CD8-positive, alpha-beta memory T cell (primary cell): ENCODE measurements at regions of chr19 and their contacts with region 1.

Region 1: DNA sequence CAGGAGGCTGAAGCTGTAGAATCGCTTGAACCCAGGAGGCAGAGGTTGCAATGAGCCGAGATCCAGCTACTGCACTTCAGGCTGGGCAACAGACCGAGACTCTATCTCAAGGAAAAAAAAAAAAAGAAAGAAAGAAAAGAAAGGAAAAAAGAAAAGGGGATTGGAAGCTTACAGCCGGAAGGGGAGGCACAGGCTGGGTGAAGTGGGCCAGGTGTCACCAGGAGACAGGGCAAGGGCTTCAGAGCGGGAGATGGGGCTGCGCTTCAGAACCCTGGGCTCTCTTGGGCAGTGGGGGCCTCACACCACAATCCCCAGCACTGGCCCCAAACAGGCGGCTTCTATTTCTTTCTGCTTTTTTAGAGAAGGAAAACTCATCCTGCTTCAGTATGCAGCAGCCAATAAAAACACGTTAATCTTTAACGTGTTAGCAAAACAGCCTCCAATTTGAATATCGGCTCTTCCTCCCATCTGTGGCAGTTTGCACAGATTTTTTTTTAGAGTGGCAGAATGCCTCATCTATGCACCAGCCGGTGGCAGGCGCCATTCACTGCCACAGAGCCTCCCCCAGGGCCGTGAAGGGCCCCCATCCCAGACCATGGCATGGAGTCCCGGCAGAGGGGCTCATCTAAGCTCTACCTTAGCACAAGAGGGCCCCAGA is 46.6 kb upstream of the C19orf12 start:
- DNase-seq: no peak
- H3K4me3 ChIP-seq: no peak overlapping the region
- H3K4me3 Mint-ChIP-seq: no peak overlapping the region
- H3K27ac ChIP-seq: no peak overlapping the region
- H3K27ac Mint-ChIP-seq: no peak overlapping the region
- H3K4me1 ChIP-seq: no peaks in the 10 kb centered on the region
- H3K4me1 Mint-ChIP-seq: peaks cover 0 to 2% (median 0%) of the 10 kb centered on the region in 3 donors
- H3K27me3 ChIP-seq: no peaks in the 10 kb centered on the region
- H3K27me3 Mint-ChIP-seq: peaks cover 3 to 4% of the 10 kb centered on the region in 2 donors

Region 2: DNA sequence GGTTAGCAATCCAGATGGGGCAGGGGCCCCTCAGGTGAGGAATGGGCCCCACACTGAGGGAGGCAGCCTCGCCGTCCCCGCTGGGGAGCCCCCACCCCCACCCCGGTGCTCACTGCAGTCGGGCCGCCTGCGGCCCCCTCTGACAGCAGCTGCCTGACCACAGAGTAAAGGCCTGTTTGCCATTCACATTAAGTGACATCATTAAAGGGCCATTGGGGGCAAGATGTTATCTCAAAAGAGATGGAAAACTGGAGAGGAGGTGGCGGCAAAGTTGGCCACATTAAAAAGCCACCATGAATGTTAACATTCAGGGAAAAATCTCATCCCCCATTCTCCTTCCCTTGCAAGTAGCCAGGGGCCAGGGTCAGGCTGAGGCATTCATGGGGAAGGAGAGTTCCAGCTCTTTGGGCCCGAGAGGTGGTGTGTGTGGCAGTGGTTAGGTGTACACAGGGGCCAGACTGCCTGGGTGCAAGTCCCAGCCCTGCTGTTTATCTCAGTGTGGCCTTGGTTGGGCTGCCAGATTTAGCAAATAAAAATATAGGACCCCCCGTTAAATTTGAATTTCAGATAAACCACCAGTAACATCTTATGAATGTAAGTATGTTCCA is 215.0 kb before region 1 on chr19:
- CTCF ChIA-PET with region 1: no interaction called
- POLR2A ChIA-PET with region 1: no interaction called
- DNase-seq: no peak
- H3K4me3 ChIP-seq: no peak overlapping the region
- H3K4me3 Mint-ChIP-seq: no peak overlapping the region
- H3K27ac ChIP-seq: no peak overlapping the region
- H3K27ac Mint-ChIP-seq: no peak overlapping the region
- H3K4me1 ChIP-seq: no peaks in the 10 kb centered on the region
- H3K4me1 Mint-ChIP-seq: no peaks in the 10 kb centered on the region
- H3K27me3 ChIP-seq: no peaks in the 10 kb centered on the region
- H3K27me3 Mint-ChIP-seq: peaks cover 10 to 28% of the 10 kb centered on the region in 2 donors

Region 3: GRCh38 chr19:29748996-29749849 is 12.5 kb before region 1 on chr19:
- CTCF ChIA-PET with region 1: no interaction called
- POLR2A ChIA-PET with region 1: no interaction called
- DNase-seq: no peak
- H3K4me3 ChIP-seq: no peak overlapping the region
- H3K4me3 Mint-ChIP-seq: no peak overlapping the region
- H3K27ac ChIP-seq: no peak overlapping the region
- H3K27ac Mint-ChIP-seq: no peak overlapping the region
- H3K4me1 ChIP-seq: no peaks in the 10 kb centered on the region
- H3K4me1 Mint-ChIP-seq: no peaks in the 10 kb centered on the region
- H3K27me3 ChIP-seq: peaks cover 5% of the 10 kb centered on the region
- H3K27me3 Mint-ChIP-seq: peaks cover 0 to 6% of the 10 kb centered on the region in 2 donors

Region 4: DNA sequence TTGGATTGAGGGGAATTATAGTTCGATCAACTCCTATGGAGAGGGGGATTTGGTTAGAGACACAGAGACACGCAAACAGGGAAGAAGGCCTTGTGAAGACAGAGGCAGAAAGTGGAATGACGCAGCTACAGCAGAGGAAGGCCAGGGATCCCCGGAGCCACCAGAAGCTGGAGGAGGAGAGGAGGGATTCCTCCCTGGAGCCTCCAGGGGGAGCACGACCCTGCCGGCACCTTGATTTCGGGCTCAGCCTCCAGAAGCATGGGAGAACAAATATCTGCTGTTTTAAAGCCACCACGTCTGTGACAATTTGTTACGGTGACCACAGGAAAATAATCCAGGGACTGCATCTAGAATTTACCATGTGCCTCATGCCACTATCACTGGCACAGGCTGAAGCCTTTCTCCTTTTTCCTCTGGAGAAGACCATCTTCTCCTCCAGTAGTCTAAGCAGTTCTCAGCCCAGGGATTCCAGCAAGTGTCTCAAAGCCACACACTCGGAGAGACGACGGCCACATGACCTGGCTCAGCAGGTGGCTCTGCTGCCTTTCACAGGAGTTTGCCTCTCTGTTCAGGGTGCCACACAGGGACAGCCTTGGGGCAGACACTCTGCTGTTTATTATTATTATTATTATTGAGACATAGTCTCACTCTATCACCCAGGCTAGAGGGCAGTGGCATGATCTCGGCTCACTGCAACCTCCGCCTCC is 10.2 kb after region 1 on chr19:
- CTCF ChIA-PET with region 1: interaction called, 31 read pairs
- POLR2A ChIA-PET with region 1: no interaction called
- DNase-seq: peak in 1 of 5 donors; percentile 23
- H3K4me3 ChIP-seq: no peak overlapping the region
- H3K4me3 Mint-ChIP-seq: no peak overlapping the region
- H3K27ac ChIP-seq: no peak overlapping the region
- H3K27ac Mint-ChIP-seq: peak overlapping the region in 1 of 8 donors; percentile 43
- H3K4me1 ChIP-seq: no peaks in the 10 kb centered on the region
- H3K4me1 Mint-ChIP-seq: peaks cover 0 to 6% (median 0%) of the 10 kb centered on the region in 3 donors
- H3K27me3 ChIP-seq: no peaks in the 10 kb centered on the region
- H3K27me3 Mint-ChIP-seq: peaks cover 0 to 13% of the 10 kb centered on the region in 2 donors